Heart left ventricle (tissue), 16 donors: ENCODE measurements at regions of chr10 and their contacts with region 1.

Region 1: GRCh38 chr10:117174439-117175214 is 22.7 kb upstream of the KCNK18 start:
- DNase-seq: peak; percentile 64 to 74 (median 70)
- ATAC-seq: peak; percentile 58 to 95 (median 86)
- H3K4me3 ChIP-seq: peak overlapping the region; percentile 14 to 54 (median 44)
- H3K27ac ChIP-seq: no peak overlapping the region
- H3K4me1 ChIP-seq: peaks cover 0 to 16% (median 10%) of the 10 kb centered on the region in 12 donors
- H3K27me3 ChIP-seq: peaks cover 25 to 80% (median 47%) of the 10 kb centered on the region in 9 donors
- CTCF ChIP-seq: peak; percentile 69 to 89 (median 80)
- POLR2A ChIP-seq: no peak

Region 2: DNA sequence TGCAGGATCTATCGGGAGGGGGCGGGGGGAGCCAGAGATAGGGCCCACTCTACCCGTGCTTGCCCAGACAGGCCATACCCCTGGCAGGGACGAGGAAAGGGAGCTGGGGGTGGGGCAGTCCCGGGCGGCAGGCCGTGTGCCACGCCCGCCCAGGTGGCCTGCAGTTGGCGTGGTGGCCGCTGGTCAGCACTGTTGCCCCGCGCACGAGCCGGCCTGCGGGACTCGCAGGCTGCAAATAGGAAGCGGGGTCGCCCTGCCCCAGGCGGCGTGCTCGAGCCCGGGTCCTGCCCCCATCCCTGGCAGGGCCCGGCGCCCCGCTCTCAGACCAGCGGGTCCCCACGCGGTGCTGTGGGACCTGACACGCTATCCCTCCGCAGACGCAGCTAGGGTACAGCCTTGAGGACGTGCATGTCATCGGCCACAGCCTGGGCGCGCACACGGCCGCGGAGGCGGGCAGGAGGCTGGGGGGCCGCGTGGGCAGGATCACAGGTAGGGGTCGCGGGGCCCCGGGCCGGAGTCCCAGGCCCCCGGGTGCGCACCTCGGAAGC is 547.2 kb before region 1 on chr10:
- intact Hi-C with region 1: loop called in 1 of 10 experiments (anchors 5 kb)
- DNase-seq: peak in 1 of 5 donors; percentile 30
- ATAC-seq: peak in 3 of 4 donors; percentile 67 to 77 (median 75)
- H3K4me3 ChIP-seq: peak overlapping the region in 7 of 12 donors; percentile 21 to 34 (median 32)
- H3K27ac ChIP-seq: no peak overlapping the region
- H3K4me1 ChIP-seq: peaks cover 0 to 7% (median 0%) of the 10 kb centered on the region in 12 donors
- H3K27me3 ChIP-seq: peaks cover 0 to 42% (median 20%) of the 10 kb centered on the region in 9 donors
- CTCF ChIP-seq: peak in 9 of 12 donors; percentile 27 to 63 (median 43)
- POLR2A ChIP-seq: no peak

Region 3: GRCh38 chr10:116683821-116684220 is 490.8 kb before region 1 on chr10:
- intact Hi-C with region 1: loop called (anchors 5 to 10 kb)
- DNase-seq: no peak
- ATAC-seq: no peak
- H3K4me3 ChIP-seq: no peak overlapping the region
- H3K27ac ChIP-seq: no peak overlapping the region
- H3K4me1 ChIP-seq: peaks cover 0 to 27% (median 16%) of the 10 kb centered on the region in 12 donors
- H3K27me3 ChIP-seq: no peaks in the 10 kb centered on the region
- CTCF ChIP-seq: no peak
- POLR2A ChIP-seq: no peak

Region 4: GRCh38 chr10:116690356-116691322 is 484.0 kb before region 1 on chr10:
- intact Hi-C with region 1: loop called in 9 of 10 experiments (anchors 5 to 10 kb)
- DNase-seq: peak in 3 of 5 donors; percentile 54 to 63 (median 58)
- ATAC-seq: peak; percentile 46 to 66 (median 62)
- H3K4me3 ChIP-seq: peak overlapping the region in 1 of 12 donors; percentile 23
- H3K27ac ChIP-seq: peak overlapping the region in 10 of 12 donors; percentile 40 to 75 (median 52)
- H3K4me1 ChIP-seq: peaks cover 0 to 55% (median 42%) of the 10 kb centered on the region in 12 donors
- H3K27me3 ChIP-seq: no peaks in the 10 kb centered on the region
- CTCF ChIP-seq: peak in 11 of 12 donors; percentile 21 to 63 (median 38)
- POLR2A ChIP-seq: no peak

Region 5: DNA sequence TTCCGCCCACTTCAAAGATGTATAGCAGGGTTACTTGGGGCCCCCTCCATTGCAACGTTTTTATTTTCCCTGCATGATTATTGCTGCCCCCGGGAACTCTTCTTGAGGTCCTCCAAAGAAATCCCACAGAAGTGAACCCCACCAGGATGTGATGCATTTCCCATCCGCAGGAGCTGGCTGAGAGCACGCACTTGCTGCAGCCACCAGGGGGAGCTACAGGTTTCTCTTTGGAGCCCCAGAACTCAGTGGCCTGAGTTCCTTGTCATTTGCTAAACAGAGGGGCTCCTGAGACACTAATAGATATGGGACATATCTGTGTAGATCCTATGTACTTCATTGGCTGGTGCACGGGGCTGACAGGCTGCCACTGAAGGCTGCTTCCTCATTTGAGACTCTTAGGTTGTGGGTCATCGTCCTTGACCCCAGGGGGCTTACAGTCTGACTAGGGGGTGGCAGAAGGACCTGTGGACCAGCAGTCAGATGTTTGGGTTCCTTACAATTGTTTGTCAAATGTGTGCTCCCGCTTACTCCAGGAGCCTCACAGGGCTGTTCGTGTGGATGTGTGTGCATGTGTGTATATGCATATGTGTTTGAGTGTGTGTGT is 377.6 kb before region 1 on chr10:
- intact Hi-C with region 1: loop called (anchors 1 to 2 kb)
- DNase-seq: peak; percentile 63 to 74 (median 72)
- ATAC-seq: peak in 3 of 4 donors; percentile 61 to 85 (median 83)
- H3K4me3 ChIP-seq: no peak overlapping the region
- H3K27ac ChIP-seq: no peak overlapping the region
- H3K4me1 ChIP-seq: no peaks in the 10 kb centered on the region
- H3K27me3 ChIP-seq: peaks cover 0 to 29% (median 0%) of the 10 kb centered on the region in 9 donors
- CTCF ChIP-seq: peak; percentile 77 to 93 (median 84)
- POLR2A ChIP-seq: no peak